Activated CD4-positive, alpha-beta memory T cell treated with anti-CD3 and anti-CD28 coated beads, Interleukin-2, amount 10 ng/mL, durations not matched to agents 7 days and 5 days (primary cell): ENCODE measurements at regions of chr16 and their contacts with region 1.

Region 1: GRCh38 chr16:8951447-8952280 is 12.0 kb downstream of the USP7 start:
- DNase-seq: no peak
- H3K4me3 Mint-ChIP-seq: no peak overlapping the region
- H3K27ac Mint-ChIP-seq: peak overlapping the region; percentile 0
- H3K4me1 Mint-ChIP-seq: peaks cover 82% of the 10 kb centered on the region
- H3K27me3 Mint-ChIP-seq: no peaks in the 10 kb centered on the region

Region 2: DNA sequence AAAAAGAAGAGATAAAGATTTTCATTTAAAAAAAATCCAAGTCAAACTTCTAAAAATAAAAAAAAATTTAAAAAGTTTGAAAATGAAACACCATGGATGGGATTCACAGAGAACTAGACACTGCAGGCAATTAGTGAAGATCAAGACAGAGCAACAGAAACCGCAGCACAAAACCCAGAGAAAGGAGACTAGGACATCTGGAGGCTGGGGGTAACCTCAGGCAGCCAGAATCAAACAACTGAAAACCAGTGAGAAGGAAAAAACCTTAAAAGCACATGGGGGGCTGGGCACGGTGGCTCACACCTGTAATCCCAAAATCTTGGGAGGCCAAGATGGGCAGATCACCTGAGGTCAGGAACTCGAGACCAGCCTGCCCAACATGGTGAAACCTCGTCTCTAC is 38.9 kb before region 1 on chr16:
- CTCF ChIA-PET with region 1: no interaction called
- POLR2A ChIA-PET with region 1: no interaction called
- DNase-seq: no peak
- H3K4me3 Mint-ChIP-seq: no peak overlapping the region
- H3K27ac Mint-ChIP-seq: no peak overlapping the region
- H3K4me1 Mint-ChIP-seq: peaks cover 78% of the 10 kb centered on the region
- H3K27me3 Mint-ChIP-seq: no peaks in the 10 kb centered on the region

Region 3: DNA sequence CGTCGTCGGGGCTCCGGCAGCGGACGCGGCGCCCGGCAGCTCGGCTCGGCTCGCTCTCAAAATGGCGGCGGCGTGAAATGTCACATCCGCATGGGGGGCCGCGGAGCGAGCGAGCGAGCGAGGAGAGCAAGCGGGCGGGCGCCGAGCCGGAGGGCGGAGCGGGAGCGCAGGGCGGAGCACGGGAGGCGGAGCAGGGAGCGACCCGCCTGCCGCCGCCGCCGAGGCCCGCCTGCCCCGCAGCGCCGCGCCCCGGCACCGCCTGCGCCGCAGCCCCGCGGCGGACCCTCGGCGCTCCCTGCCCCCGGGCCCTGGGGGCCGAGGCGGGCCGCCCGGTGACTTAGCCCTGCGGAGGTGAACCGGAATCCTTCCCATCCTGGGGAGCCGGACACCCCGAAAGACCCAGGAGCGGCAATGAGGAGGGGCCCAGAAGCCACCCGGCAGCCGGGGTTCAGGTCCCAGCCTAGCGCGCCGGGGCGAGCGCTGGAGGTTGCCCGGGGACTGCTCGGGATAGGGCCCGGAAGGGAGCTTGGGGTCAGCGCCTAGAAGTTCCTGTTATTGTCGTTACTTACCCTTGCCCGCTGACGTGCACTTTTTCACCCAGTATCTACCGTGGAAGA is 12.3 kb after region 1 on chr16 and contains the start of gene USP7:
- CTCF ChIA-PET with region 1: interaction called, 3 read pairs
- POLR2A ChIA-PET with region 1: interaction called, 32 read pairs
- DNase-seq: peak; percentile 94
- H3K4me3 Mint-ChIP-seq: peak within 1 kb of the TSS; percentile 94
- H3K27ac Mint-ChIP-seq: peak within 1 kb of the TSS; percentile 92
- H3K4me1 Mint-ChIP-seq: peaks cover 41% of the 10 kb centered on the region
- H3K27me3 Mint-ChIP-seq: peaks cover 6% of the 10 kb centered on the region
- total RNA-seq, gene USP7: 162 to 166 TPM

Region 4: DNA sequence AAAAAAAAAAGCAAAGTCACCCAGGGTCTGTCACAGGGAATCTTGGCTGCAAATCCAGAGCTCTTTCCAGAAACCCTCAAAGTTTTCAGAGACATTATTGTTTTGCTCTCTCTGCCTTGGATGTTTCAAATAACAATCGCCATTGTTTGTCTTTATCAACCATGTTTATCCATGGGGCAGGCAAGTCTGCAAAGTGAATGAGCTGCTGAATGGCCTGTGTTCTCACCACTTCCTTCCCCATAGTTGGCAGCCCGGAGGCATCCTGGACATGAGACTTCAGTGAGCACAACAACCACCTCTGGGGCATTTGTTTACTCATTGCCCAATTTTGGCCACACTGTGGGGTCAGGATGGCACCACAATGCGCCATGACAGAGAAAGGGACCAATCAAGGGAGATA is 65.2 kb after region 1 on chr16:
- CTCF ChIA-PET with region 1: no interaction called
- POLR2A ChIA-PET with region 1: no interaction called
- DNase-seq: no peak
- H3K4me3 Mint-ChIP-seq: no peak overlapping the region
- H3K27ac Mint-ChIP-seq: no peak overlapping the region
- H3K4me1 Mint-ChIP-seq: no peaks in the 10 kb centered on the region
- H3K27me3 Mint-ChIP-seq: no peaks in the 10 kb centered on the region

Region 5: GRCh38 chr16:9248162-9248561 is 296.5 kb after region 1 on chr16:
- CTCF ChIA-PET with region 1: no interaction called
- POLR2A ChIA-PET with region 1: no interaction called
- DNase-seq: no peak
- H3K4me3 Mint-ChIP-seq: no peak overlapping the region
- H3K27ac Mint-ChIP-seq: no peak overlapping the region
- H3K4me1 Mint-ChIP-seq: no peaks in the 10 kb centered on the region
- H3K27me3 Mint-ChIP-seq: no peaks in the 10 kb centered on the region